AG04449 (cell line): ENCODE measurements at regions of chr11 and their contacts with region 1.

Region 1: GRCh38 chr11:47394322-47395222 is 13.8 kb upstream of the SLC39A13 start:
- DNase-seq: no peak
- H3K4me3 ChIP-seq: no peak overlapping the region
- CTCF ChIP-seq: no peak

Region 2: GRCh38 chr11:47407746-47408590 is 13.4 kb after region 1 on chr11 and contains the start of gene SLC39A13:
- CTCF ChIA-PET with region 1: interaction called, 35 read pairs
- POLR2A ChIA-PET with region 1: interaction called, 4 read pairs
- DNase-seq: peak; percentile 71
- H3K4me3 ChIP-seq: peak within 1 kb of the TSS; percentile 95
- CTCF ChIP-seq: peak; percentile 81

Region 3: DNA sequence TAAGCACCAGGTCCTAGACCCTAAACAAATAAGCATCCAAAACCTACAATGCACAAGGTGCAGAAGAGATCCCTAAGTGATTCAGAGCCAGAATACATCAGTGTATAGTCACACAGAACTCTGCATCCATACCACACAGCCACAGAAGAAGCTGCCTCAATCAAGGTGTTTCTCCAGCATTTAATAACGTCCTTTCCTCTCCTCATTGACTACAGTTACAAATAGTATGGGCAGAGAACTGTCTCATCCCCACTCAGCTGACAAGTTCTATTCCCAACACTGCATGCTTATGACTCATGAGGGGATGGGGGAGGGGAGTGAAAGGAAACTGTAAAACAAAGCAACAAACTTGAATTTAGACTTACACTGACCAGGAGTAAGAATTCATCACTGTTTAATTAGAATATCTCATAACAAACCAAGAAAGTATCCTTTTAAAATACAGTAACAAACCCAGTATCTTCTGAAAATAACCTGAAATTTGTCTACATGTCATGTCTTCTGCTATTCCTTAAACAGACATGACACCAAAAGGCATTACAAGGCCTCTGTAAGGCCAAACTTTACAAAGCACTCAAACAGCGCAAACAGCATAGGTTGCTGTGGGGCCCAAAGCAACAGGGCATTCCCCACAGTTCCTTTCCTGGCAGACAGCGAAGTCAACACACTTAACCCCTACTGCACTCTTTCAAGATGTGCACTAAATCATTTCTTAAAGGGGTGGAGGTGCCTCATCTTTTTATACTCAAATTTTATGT is 129.1 kb after region 1 on chr11:
- CTCF ChIA-PET with region 1: no interaction called
- POLR2A ChIA-PET with region 1: no interaction called
- DNase-seq: no peak
- H3K4me3 ChIP-seq: peak overlapping the region; percentile 29
- CTCF ChIP-seq: no peak